Endothelial cell of umbilical vein (primary cell): ENCODE measurements at regions of chr10 and their contacts with region 1.

Region 1: GRCh38 chr10:70925377-70926225 is 37.2 kb upstream of the PCBD1 start:
- DNase-seq: peak; percentile 30
- H3K4me3 ChIP-seq: no peak overlapping the region
- H3K27ac ChIP-seq: no peak overlapping the region
- H3K4me1 ChIP-seq: no peaks in the 10 kb centered on the region
- H3K27me3 ChIP-seq: peaks cover 5 to 9% of the 10 kb centered on the region in 2 experiments
- CTCF ChIP-seq: peak; percentile 91 to 94
- POLR2A ChIP-seq: no peak

Region 2: DNA sequence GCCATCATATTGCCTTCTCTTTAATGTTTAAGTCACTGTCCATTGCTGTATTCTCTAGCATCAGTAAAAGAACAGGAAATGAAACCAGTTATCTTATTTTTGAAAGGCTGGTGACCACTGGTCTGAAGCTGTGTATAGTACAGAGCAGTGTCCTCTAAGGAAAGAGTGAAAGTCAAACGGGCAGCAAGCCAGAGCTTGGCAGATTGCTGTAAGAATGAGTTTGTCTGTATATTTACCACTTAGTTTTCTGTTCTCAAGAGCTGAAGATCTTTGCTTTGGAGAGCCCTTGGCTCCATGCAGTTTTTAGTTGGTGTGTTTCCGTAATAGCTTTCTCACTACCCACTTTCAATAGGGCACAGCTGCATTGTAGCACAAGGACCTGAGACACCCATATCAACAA is 69.1 kb before region 1 on chr10:
- CTCF ChIA-PET with region 1: no interaction called
- POLR2A ChIA-PET with region 1: no interaction called
- dilution Hi-C with region 1: no loop called
- intact Hi-C with region 1: no loop called
- DNase-seq: no peak
- H3K4me3 ChIP-seq: no peak overlapping the region
- H3K27ac ChIP-seq: no peak overlapping the region
- H3K4me1 ChIP-seq: no peaks in the 10 kb centered on the region
- H3K27me3 ChIP-seq: no peaks in the 10 kb centered on the region
- CTCF ChIP-seq: no peak
- POLR2A ChIP-seq: no peak

Region 3: GRCh38 chr10:70903262-70903921 is 22.2 kb before region 1 on chr10:
- CTCF ChIA-PET with region 1: interaction called, 25 read pairs
- POLR2A ChIA-PET with region 1: no interaction called
- dilution Hi-C with region 1: no loop called
- intact Hi-C with region 1: no loop called
- DNase-seq: peak; percentile 56
- H3K4me3 ChIP-seq: no peak overlapping the region
- H3K27ac ChIP-seq: no peak overlapping the region
- H3K4me1 ChIP-seq: no peaks in the 10 kb centered on the region
- H3K27me3 ChIP-seq: peaks cover 4 to 10% of the 10 kb centered on the region in 2 experiments
- CTCF ChIP-seq: peak; percentile 89 to 91
- POLR2A ChIP-seq: no peak

Region 4: GRCh38 chr10:71068861-71069271 is 143.3 kb after region 1 on chr10:
- CTCF ChIA-PET with region 1: interaction called, 4 read pairs
- POLR2A ChIA-PET with region 1: no interaction called
- dilution Hi-C with region 1: no loop called
- intact Hi-C with region 1: loop called (anchors 10 kb)
- DNase-seq: peak; percentile 56
- H3K4me3 ChIP-seq: no peak overlapping the region
- H3K27ac ChIP-seq: no peak overlapping the region
- H3K4me1 ChIP-seq: peaks cover 6% of the 10 kb centered on the region
- H3K27me3 ChIP-seq: no peaks in the 10 kb centered on the region
- CTCF ChIP-seq: no peak
- POLR2A ChIP-seq: no peak

Region 5: GRCh38 chr10:71205468-71205867 is 279.9 kb after region 1 on chr10:
- CTCF ChIA-PET with region 1: interaction called, 37 read pairs
- POLR2A ChIA-PET with region 1: no interaction called
- dilution Hi-C with region 1: no loop called
- intact Hi-C with region 1: loop called (anchors 1 kb)
- DNase-seq: peak; percentile 73
- H3K4me3 ChIP-seq: no peak overlapping the region
- H3K27ac ChIP-seq: no peak overlapping the region
- H3K4me1 ChIP-seq: peaks cover 17% of the 10 kb centered on the region
- H3K27me3 ChIP-seq: peaks cover 13 to 18% of the 10 kb centered on the region in 2 experiments
- CTCF ChIP-seq: no peak
- POLR2A ChIP-seq: no peak

Region 6: GRCh38 chr10:71285180-71285545 is 359.6 kb after region 1 on chr10:
- CTCF ChIA-PET with region 1: interaction called, 108 read pairs
- POLR2A ChIA-PET with region 1: no interaction called
- dilution Hi-C with region 1: no loop called
- intact Hi-C with region 1: loop called (anchors 1 kb)
- DNase-seq: peak; percentile 36
- H3K4me3 ChIP-seq: no peak overlapping the region
- H3K27ac ChIP-seq: no peak overlapping the region
- H3K4me1 ChIP-seq: no peaks in the 10 kb centered on the region
- H3K27me3 ChIP-seq: no peaks in the 10 kb centered on the region
- CTCF ChIP-seq: peak; percentile 64 to 82
- POLR2A ChIP-seq: no peak